ENCODE measurements at regions of chr2 and their contacts with region 1.

Region 1: GRCh38 chr2:135797497-135798274 is 39.3 kb downstream of the LCT start:
- DNase-seq: peak; percentile 68 to 70 (median 70)
- H3K4me3 ChIP-seq: no peak overlapping the region
- H3K4me3 Mint-ChIP-seq: peak overlapping the region in 1 of 8 donors; percentile 14
- H3K27ac ChIP-seq: no peak overlapping the region
- H3K27ac Mint-ChIP-seq: peak overlapping the region in 1 of 7 donors; percentile 80
- H3K4me1 ChIP-seq: peaks cover 4% of the 10 kb centered on the region
- H3K4me1 Mint-ChIP-seq: peaks cover 5 to 11% (median 10%) of the 10 kb centered on the region in 4 donors
- H3K27me3 ChIP-seq: no peaks in the 10 kb centered on the region
- H3K27me3 Mint-ChIP-seq: no peaks in the 10 kb centered on the region

Region 2: DNA sequence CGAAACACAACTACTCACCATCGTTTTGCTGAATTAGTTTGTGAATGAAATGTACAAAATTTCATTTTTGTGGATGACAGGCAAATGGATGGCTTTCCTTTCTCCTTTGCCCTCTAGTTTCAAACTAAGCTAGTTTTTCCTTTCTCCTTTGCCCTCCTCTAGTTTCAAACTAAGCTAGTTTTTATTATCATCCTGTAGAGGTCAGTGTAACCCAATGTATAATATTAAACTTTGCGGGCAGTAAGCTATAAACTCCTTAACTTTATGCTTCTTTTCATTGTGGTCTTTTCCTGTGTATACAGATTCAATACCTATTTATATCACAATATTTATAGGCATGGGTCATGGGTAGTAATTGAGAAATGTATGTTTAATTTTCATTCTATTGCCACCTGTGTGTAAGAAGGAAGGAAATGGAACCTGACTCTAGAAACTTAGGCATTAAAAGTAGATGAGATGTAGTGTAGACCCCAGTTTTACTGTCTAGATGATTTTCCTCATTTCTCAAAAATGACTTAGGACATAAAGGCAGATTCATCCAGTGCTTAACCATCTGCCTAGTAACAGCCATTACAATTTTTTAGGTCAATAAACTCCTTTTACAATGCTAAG is 808.6 kb before region 1 on chr2:
- CTCF ChIA-PET with region 1: interaction called, 36 read pairs
- POLR2A ChIA-PET with region 1: no interaction called
- intact Hi-C with region 1: loop called (anchors 1 kb)
- DNase-seq: peak in 4 of 5 donors; percentile 11 to 22 (median 14)
- H3K4me3 ChIP-seq: no peak overlapping the region
- H3K4me3 Mint-ChIP-seq: no peak overlapping the region
- H3K27ac ChIP-seq: no peak overlapping the region
- H3K27ac Mint-ChIP-seq: no peak overlapping the region
- H3K4me1 ChIP-seq: no peaks in the 10 kb centered on the region
- H3K4me1 Mint-ChIP-seq: no peaks in the 10 kb centered on the region
- H3K27me3 ChIP-seq: peaks cover 4% of the 10 kb centered on the region
- H3K27me3 Mint-ChIP-seq: peaks cover 0 to 5% of the 10 kb centered on the region in 2 donors

Region 3: GRCh38 chr2:135473567-135473966 is 324.1 kb before region 1 on chr2:
- CTCF ChIA-PET with region 1: interaction called, 3 read pairs
- POLR2A ChIA-PET with region 1: no interaction called
- intact Hi-C with region 1: loop called (anchors 1 kb)
- DNase-seq: peak in 4 of 5 donors; percentile 4 to 25 (median 10)
- H3K4me3 ChIP-seq: no peak overlapping the region
- H3K4me3 Mint-ChIP-seq: no peak overlapping the region
- H3K27ac ChIP-seq: no peak overlapping the region
- H3K27ac Mint-ChIP-seq: no peak overlapping the region
- H3K4me1 ChIP-seq: no peaks in the 10 kb centered on the region
- H3K4me1 Mint-ChIP-seq: no peaks in the 10 kb centered on the region
- H3K27me3 ChIP-seq: no peaks in the 10 kb centered on the region
- H3K27me3 Mint-ChIP-seq: no peaks in the 10 kb centered on the region

Region 4: GRCh38 chr2:135785032-135785431 is 12.7 kb before region 1 on chr2:
- CTCF ChIA-PET with region 1: interaction called, 77 read pairs
- POLR2A ChIA-PET with region 1: no interaction called
- intact Hi-C with region 1: no loop called
- DNase-seq: peak in 1 of 5 donors; percentile 4
- H3K4me3 ChIP-seq: no peak overlapping the region
- H3K4me3 Mint-ChIP-seq: no peak overlapping the region
- H3K27ac ChIP-seq: no peak overlapping the region
- H3K27ac Mint-ChIP-seq: no peak overlapping the region
- H3K4me1 ChIP-seq: no peaks in the 10 kb centered on the region
- H3K4me1 Mint-ChIP-seq: peaks cover 0 to 3% (median under 1%) of the 10 kb centered on the region in 4 donors
- H3K27me3 ChIP-seq: no peaks in the 10 kb centered on the region
- H3K27me3 Mint-ChIP-seq: no peaks in the 10 kb centered on the region

Region 5: DNA sequence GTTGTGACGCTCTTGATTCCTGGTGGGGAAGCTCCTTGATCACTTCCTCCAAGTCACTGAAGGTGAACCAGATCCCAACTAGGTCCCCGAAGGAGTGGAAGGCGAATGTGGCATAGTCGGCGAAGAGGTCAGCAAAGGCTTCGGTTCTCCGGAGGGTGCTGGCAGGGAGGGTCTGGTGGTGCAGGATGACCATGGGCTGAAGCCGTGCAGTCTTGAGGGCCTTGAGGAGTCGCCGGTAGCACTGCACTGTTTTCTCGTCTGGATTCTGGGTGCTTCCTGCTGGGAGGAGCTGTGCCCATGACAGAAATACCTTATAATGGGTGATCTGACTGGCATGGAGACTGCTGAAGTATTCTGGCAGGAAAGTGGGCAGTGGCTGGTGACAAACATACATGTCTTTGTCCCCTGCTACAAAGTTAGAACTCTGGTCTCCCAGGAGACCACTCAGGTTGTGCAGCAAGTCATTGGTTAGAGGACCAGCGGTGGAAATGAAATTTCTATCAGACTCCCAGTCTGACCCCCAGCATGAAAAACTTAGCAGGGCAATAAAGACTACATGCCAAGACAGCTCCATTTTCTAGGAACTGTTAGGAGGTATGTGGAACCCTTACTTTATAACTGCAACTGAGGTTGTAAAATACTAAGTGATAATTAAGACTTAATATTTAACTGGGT is 39.0 kb after region 1 on chr2 and contains the start of gene LCT:
- CTCF ChIA-PET with region 1: interaction called, 11 read pairs
- POLR2A ChIA-PET with region 1: no interaction called
- intact Hi-C with region 1: no loop called
- DNase-seq: no peak
- H3K4me3 ChIP-seq: no peak within 1 kb of the TSS
- H3K4me3 Mint-ChIP-seq: no peak within 1 kb of the TSS
- H3K27ac ChIP-seq: no peak within 1 kb of the TSS
- H3K27ac Mint-ChIP-seq: peak within 1 kb of the TSS in 2 of 7 donors; percentile 3 to 16
- H3K4me1 ChIP-seq: no peaks in the 10 kb centered on the region
- H3K4me1 Mint-ChIP-seq: peaks cover 4 to 9% (median 6%) of the 10 kb centered on the region in 4 donors
- H3K27me3 ChIP-seq: no peaks in the 10 kb centered on the region
- H3K27me3 Mint-ChIP-seq: no peaks in the 10 kb centered on the region
- total RNA-seq, gene LCT: 0.06 TPM

Region 6: GRCh38 chr2:135974036-135974435 is 176.3 kb after region 1 on chr2:
- CTCF ChIA-PET with region 1: no interaction called
- POLR2A ChIA-PET with region 1: no interaction called
- intact Hi-C with region 1: no loop called
- DNase-seq: no peak
- H3K4me3 ChIP-seq: no peak overlapping the region
- H3K4me3 Mint-ChIP-seq: no peak overlapping the region
- H3K27ac ChIP-seq: no peak overlapping the region
- H3K27ac Mint-ChIP-seq: peak overlapping the region in 1 of 7 donors; percentile 13
- H3K4me1 ChIP-seq: peaks cover 16% of the 10 kb centered on the region
- H3K4me1 Mint-ChIP-seq: peaks cover 42 to 60% (median 49%) of the 10 kb centered on the region in 4 donors
- H3K27me3 ChIP-seq: no peaks in the 10 kb centered on the region
- H3K27me3 Mint-ChIP-seq: no peaks in the 10 kb centered on the region

Region 7: GRCh38 chr2:136344339-136344738 is 546.7 kb after region 1 on chr2:
- CTCF ChIA-PET with region 1: no interaction called
- POLR2A ChIA-PET with region 1: no interaction called
- intact Hi-C with region 1: no loop called
- DNase-seq: no peak
- H3K4me3 ChIP-seq: no peak overlapping the region
- H3K4me3 Mint-ChIP-seq: no peak overlapping the region
- H3K27ac ChIP-seq: no peak overlapping the region
- H3K27ac Mint-ChIP-seq: no peak overlapping the region
- H3K4me1 ChIP-seq: no peaks in the 10 kb centered on the region
- H3K4me1 Mint-ChIP-seq: no peaks in the 10 kb centered on the region
- H3K27me3 ChIP-seq: no peaks in the 10 kb centered on the region
- H3K27me3 Mint-ChIP-seq: no peaks in the 10 kb centered on the region